T-cell (primary cell): ENCODE measurements at regions of chr13 and their contacts with region 1.

Region 1: GRCh38 chr13:91406619-91407018 is 8.2 kb downstream of the GPC5 start:
- DNase-seq: peak in 3 of 35 experiments; percentile 0 to 62 (median 8)
- ATAC-seq: no peak
- H3K4me3 ChIP-seq: no peak overlapping the region
- H3K4me3 Mint-ChIP-seq: no peak overlapping the region
- H3K27ac ChIP-seq: no peak overlapping the region
- H3K27ac Mint-ChIP-seq: no peak overlapping the region
- H3K4me1 ChIP-seq: no peaks in the 10 kb centered on the region
- H3K4me1 Mint-ChIP-seq: no peaks in the 10 kb centered on the region
- H3K27me3 ChIP-seq: peaks cover 0 to 12% of the 10 kb centered on the region in 2 experiments
- H3K27me3 Mint-ChIP-seq: peaks cover 18 to 30% of the 10 kb centered on the region in 2 donors

Region 2: DNA sequence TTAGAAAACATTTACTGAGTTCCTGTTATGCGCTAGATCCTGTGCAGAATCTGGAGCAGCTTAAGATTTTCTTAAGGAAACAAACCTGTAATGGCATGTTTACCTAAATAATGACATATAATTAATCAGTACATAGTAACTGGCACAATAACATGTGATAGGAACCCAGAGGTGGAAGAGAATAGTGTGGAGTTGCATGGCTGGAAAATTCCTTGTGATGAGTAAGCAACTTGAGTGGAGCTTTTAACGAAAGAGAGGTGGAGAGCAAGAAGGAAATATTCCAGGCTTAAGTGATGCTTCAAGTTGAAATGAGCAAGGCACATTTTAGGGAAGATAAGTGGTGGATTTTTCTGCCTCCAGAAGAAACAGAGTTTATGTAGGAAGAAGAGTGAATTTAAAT is 17.4 kb before region 1 on chr13:
- CTCF ChIA-PET with region 1: interaction called in 1 of 2 experiments, 10 read pairs
- POLR2A ChIA-PET with region 1: no interaction called
- DNase-seq: no peak
- ATAC-seq: no peak
- H3K4me3 ChIP-seq: no peak overlapping the region
- H3K4me3 Mint-ChIP-seq: no peak overlapping the region
- H3K27ac ChIP-seq: no peak overlapping the region
- H3K27ac Mint-ChIP-seq: no peak overlapping the region
- H3K4me1 ChIP-seq: no peaks in the 10 kb centered on the region
- H3K4me1 Mint-ChIP-seq: no peaks in the 10 kb centered on the region
- H3K27me3 ChIP-seq: peaks cover 2 to 6% of the 10 kb centered on the region in 2 experiments
- H3K27me3 Mint-ChIP-seq: peaks cover 40 to 46% of the 10 kb centered on the region in 2 donors